ENCODE measurements at regions of chr6 and their contacts with region 1.

Region 1: GRCh38 chr6:146770965-146771735 is 172.4 kb downstream of the ADGB start:
- DNase-seq: peak; percentile 40
- H3K4me3 Mint-ChIP-seq: peak overlapping the region; percentile 53
- H3K27ac Mint-ChIP-seq: peak overlapping the region; percentile 27
- H3K4me1 Mint-ChIP-seq: peaks cover 20% of the 10 kb centered on the region
- H3K27me3 Mint-ChIP-seq: peaks cover 5% of the 10 kb centered on the region

Region 2: DNA sequence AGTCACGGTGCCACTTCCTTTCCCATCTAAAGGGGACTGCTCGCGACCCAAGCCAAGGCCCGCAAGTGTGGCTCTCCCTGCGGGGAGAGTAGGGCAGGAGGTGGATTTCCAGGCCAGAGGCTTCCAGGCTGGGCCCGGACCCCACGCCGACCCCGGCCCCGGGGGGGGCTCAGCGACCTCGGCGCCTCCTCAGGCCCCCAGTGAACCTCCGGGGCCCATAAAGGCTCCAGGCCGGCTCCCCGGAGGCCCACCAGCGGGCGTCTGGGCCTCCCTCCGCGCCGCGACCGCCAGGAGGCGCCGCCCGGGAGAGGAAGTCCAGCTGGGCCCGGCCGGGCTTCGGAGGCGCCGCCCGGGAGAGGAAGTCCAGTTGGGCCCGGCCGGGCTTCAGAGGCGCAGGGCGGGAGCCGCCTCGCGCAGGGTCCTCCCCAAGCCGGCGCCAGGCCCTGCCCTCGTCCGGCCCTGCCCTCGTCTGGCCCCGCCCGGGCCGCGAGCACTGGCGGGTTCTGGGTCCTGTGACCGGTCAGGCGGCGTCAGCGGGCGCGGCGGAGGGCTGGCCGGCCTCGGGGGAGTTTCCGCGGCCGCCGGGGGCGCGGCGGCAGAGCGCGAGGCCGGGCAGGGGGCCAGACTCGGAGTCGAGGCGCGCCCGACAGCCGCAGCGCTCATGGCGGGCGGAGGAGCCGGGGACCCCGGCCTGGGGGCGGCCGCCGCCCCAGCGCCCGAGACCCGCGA is 227.8 kb before region 1 on chr6 and contains the start of gene RAB32:
- intact Hi-C with region 1: loop called (anchors 5 kb)
- DNase-seq: peak; percentile 5
- H3K4me3 Mint-ChIP-seq: peak within 1 kb of the TSS; percentile 86
- H3K27ac Mint-ChIP-seq: peak within 1 kb of the TSS; percentile 68
- H3K4me1 Mint-ChIP-seq: peaks cover 10% of the 10 kb centered on the region
- H3K27me3 Mint-ChIP-seq: peaks cover 26% of the 10 kb centered on the region
- total RNA-seq, gene RAB32: 1.1 and 1.3 TPM in 2 replicates

Region 3: GRCh38 chr6:146664871-146665351 is 106.2 kb before region 1 on chr6:
- intact Hi-C with region 1: no loop called
- DNase-seq: no peak
- H3K4me3 Mint-ChIP-seq: no peak overlapping the region
- H3K27ac Mint-ChIP-seq: no peak overlapping the region
- H3K4me1 Mint-ChIP-seq: no peaks in the 10 kb centered on the region
- H3K27me3 Mint-ChIP-seq: peaks cover 5% of the 10 kb centered on the region

Region 4: DNA sequence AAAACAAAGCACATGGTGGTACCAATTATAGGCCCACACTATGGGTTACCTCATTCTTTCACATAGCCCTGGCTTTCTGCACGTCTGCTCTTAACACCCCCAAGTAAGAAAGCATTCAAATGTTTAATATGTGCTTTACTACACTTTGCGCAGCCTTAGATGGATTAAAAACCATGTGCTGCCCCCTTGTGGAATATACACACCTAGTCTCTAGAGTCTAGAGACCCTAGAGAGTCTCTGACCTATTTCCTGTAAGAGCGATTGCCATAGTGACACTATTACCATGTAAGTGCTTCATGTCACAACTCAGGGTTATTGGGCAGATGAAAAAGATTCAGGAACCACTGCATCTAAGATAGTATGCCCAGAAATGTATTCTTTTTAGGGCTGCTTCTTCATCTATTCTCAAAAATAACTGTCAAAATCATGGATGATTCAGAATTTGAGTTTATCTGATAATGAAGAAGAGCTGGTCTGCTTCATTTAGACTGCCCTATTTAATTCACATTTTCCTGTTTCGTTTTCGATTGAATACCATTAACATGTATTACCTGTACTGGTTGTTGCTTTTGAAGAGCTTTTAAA is 13.9 kb after region 1 on chr6:
- intact Hi-C with region 1: loop called (anchors 2 kb)
- DNase-seq: peak; percentile 8
- H3K4me3 Mint-ChIP-seq: no peak overlapping the region
- H3K27ac Mint-ChIP-seq: no peak overlapping the region
- H3K4me1 Mint-ChIP-seq: peaks cover 11% of the 10 kb centered on the region
- H3K27me3 Mint-ChIP-seq: peaks cover 13% of the 10 kb centered on the region

Measured in activated T-helper 1 cell treated with anti-CD3 and anti-CD28 coated beads, Interleukin-12 subunit alpha, Interleukin-12 subunit beta, Interleukin-2, Interleukin-4 antibody, amounts not matched to agents 30 ng/mL and 10 ng/mL and 1 ng/mL, durations not matched to agents 14 hours and 24 hours and 36 hours (primary cell).